Activated B cell treated with CpG ODN at 0.5 μM for 24 hours (primary cell): ENCODE measurements at regions of chr17 and their contacts with region 1.

Region 1: DNA sequence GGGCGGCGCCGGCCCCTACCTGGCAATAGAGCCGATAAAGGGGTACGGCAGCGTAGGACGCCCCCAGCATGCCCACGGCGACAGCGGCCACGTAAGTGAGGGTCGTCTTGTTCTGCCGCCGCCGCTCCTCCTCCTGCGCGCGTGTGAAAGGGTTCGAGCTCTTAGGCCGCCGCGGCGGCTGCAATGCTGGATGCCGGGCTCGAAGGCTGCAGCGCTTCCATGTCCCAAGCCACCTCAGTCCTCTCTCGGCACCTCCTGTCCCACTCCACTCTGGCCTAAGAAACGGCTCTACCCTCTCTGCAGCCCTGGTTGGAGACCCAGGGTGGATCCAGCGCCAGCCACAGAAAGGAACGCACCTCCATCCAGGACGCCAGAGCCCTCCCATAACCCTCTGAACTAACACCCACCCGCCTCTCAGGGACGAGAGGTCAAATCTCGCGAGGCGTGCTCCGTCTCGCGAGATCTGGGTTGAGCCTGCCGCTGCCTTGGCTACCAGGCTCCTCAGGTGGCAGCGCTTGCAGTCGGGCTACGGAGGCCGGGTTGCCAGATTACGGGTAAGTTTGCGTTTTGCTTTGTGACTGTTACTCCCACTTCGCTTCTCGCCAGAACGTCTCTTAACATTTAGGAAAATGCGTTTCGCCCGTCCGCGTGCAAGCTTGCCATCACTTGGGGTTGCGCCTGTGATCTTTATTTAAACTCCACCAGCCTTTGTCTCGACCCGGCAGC is at the starts of genes COX11 and STXBP4:
- DNase-seq: peak; percentile 90
- ATAC-seq: peak; percentile 97
- H3K4me3 Mint-ChIP-seq: no peak within 1 kb of the TSS
- H3K27ac Mint-ChIP-seq: no peak within 1 kb of the TSS
- H3K4me1 Mint-ChIP-seq: peaks cover 24% of the 10 kb centered on the region
- H3K27me3 Mint-ChIP-seq: no peaks in the 10 kb centered on the region
- CTCF ChIP-seq: no peak
- total RNA-seq, gene COX11: 38.5 and 46.5 TPM in 2 replicates
- total RNA-seq, gene STXBP4: 6.9 and 9.5 TPM in 2 replicates

Region 2: DNA sequence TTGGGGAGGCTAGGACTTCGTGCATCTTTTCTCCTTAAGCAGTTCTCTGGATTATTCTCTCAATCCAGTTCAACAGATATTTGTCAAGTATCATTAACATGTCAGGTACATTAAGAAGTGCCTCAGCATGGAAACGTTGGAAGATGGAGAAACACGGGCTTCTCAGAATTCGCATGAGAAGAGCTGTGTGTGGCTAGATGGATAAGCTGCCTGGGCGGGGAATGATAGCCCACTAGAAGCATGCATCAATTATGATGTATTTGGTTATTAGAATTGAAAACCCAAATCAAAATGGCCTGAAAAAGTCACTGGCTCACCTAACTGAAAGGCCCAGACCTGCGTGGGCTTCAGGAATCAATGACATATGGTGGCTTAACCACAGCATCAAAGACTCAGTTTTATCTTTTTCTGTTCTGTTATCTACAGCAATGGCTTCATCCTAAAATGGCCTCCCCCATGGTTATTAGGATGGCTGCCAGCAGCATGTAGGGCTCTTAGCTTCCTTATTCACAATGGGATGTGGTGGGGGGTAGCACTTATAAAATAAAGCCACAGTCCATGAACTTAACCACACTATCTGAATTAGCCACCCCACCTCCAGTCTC is 409.3 kb after region 1 on chr17:
- CTCF ChIA-PET with region 1: no interaction called
- POLR2A ChIA-PET with region 1: no interaction called
- intact Hi-C with region 1: no loop called
- DNase-seq: no peak
- ATAC-seq: no peak
- H3K4me3 Mint-ChIP-seq: no peak overlapping the region
- H3K27ac Mint-ChIP-seq: no peak overlapping the region
- H3K4me1 Mint-ChIP-seq: no peaks in the 10 kb centered on the region
- H3K27me3 Mint-ChIP-seq: peaks cover 7% of the 10 kb centered on the region
- CTCF ChIP-seq: no peak

Region 3: DNA sequence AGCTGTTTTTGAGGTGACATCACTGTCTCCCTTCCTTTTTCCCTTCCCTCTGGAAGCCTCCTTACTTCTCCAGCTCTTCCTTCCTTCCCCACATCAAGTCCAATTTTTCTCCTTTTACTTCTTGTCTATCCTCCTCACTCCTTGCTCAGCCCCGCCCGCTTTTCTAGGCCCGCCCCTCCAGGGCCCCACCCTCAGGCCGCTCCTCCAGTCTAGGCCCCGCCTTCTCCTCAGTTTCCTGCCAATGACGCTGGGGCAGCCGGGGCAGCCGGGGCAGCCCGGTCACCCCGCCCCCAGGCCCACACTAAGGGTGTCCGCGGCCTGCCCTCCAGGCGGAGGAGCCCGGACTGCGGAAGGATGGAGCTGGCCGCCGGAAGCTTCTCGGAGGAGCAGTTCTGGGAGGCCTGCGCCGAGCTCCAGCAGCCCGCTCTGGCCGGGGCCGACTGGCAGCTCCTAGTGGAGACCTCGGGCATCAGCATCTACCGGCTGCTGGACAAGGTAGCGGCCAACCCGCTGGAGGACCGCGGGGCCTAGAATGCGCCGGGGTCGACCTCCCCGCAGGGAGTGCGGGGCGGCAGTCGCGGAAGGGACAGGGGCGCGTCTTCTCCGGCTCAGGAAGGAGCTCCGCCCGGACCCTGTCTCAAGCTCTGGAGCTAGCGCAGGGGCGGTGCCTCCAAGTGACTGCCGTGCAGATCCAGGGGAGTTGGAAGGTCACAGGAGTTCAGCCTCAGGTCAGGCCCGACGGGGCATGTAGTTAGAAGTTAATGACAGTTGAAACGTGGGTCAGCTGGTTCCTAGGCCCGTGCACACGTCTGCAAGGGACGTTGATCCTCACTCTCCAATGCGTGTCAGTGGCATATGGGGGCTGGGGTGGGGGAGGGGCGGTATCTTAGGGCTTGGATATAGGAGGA is 782.6 kb after region 1 on chr17 and contains the start of gene PCTP:
- CTCF ChIA-PET with region 1: no interaction called
- POLR2A ChIA-PET with region 1: no interaction called
- intact Hi-C with region 1: loop called (anchors 5 kb)
- DNase-seq: peak; percentile 80
- ATAC-seq: peak; percentile 98
- H3K4me3 Mint-ChIP-seq: peak within 1 kb of the TSS; percentile 84
- H3K27ac Mint-ChIP-seq: no peak within 1 kb of the TSS
- H3K4me1 Mint-ChIP-seq: peaks cover 14% of the 10 kb centered on the region
- H3K27me3 Mint-ChIP-seq: peaks cover 5% of the 10 kb centered on the region
- CTCF ChIP-seq: no peak
- total RNA-seq, gene PCTP: 8.0 and 9.0 TPM in 2 replicates